AG04450 (cell line): ENCODE measurements at regions of chr4 and their contacts with region 1.

Region 1: DNA sequence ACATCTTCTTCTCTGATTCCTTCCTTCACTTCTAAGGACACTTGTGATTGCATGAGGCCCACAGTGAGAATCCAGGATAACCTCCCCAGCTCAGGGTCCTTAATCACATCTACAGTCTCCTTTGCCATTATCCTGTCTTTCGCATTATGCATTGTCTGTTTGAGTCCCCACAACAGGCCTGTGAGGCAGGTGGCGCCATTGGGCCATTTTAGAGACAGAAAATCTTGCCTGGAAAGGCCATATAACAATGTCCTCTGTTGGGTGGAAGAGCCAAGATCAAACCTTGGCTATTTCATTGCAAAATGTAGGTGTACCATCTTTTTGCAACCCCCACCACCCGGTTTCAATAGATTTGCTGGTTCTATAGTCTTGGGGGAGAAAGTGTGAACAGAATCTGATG is 11.8 kb upstream of the DCUN1D4 start:
- DNase-seq: no peak
- H3K4me3 ChIP-seq: no peak overlapping the region
- H3K27ac ChIP-seq: no peak overlapping the region
- H3K27me3 ChIP-seq: no peaks in the 10 kb centered on the region
- CTCF ChIP-seq: peak; percentile 81

Region 2: GRCh38 chr4:51909236-51909703 is 78.1 kb after region 1 on chr4:
- CTCF ChIA-PET with region 1: no interaction called
- POLR2A ChIA-PET with region 1: no interaction called
- DNase-seq: no peak
- H3K4me3 ChIP-seq: no peak overlapping the region
- H3K27ac ChIP-seq: no peak overlapping the region
- H3K27me3 ChIP-seq: no peaks in the 10 kb centered on the region
- CTCF ChIP-seq: no peak

Region 3: DNA sequence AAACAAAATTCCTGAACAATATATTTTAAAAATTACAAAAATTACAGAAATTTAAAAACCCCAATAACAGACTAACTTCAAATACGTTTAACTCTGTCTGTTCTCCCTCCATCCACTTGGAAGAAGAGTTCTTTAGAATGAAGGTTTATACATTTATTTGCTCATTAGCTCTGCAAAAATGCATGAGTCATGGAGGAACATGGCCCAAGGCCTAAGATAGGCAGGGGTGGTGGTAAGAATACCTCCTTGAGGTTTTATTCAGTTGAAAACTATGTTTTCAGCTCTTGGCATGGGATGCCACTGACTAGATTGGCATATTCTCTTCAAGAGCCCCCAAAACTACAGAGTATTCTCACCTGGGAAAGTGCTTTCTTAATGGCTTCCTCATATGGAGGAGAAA is 197.8 kb after region 1 on chr4:
- CTCF ChIA-PET with region 1: interaction called, 28 read pairs
- POLR2A ChIA-PET with region 1: no interaction called
- DNase-seq: peak; percentile 26
- H3K4me3 ChIP-seq: no peak overlapping the region
- H3K27ac ChIP-seq: no peak overlapping the region
- H3K27me3 ChIP-seq: no peaks in the 10 kb centered on the region
- CTCF ChIP-seq: no peak